ENCODE measurements at regions of chr1 and their contacts with region 1.

Region 1: GRCh38 chr1:40531381-40532061 is at the start of gene ZNF684:
- DNase-seq: peak; percentile 69 to 95
- ATAC-seq: peak; percentile 96 to 98 (median 96)
- H3K4me3 ChIP-seq: peak within 1 kb of the TSS; percentile 70
- H3K4me3 Mint-ChIP-seq: peak within 1 kb of the TSS; percentile 98
- H3K27ac ChIP-seq: peak within 1 kb of the TSS; percentile 76
- H3K27ac Mint-ChIP-seq: peak within 1 kb of the TSS; percentile 92 to 98
- H3K4me1 ChIP-seq: peaks cover 8% of the 10 kb centered on the region
- H3K4me1 Mint-ChIP-seq: peaks cover 26% of the 10 kb centered on the region in 2 donors
- H3K27me3 ChIP-seq: peaks cover 2% of the 10 kb centered on the region
- H3K27me3 Mint-ChIP-seq: peaks cover 13 to 34% of the 10 kb centered on the region in 2 donors
- CTCF ChIP-seq: no peak
- total RNA-seq, gene ZNF684: 5.5 to 9.7 (median 5.7) TPM

Region 2: GRCh38 chr1:40476924-40477677 is 54.4 kb before region 1 on chr1 and contains the start of gene ZFP69:
- intact Hi-C with region 1: loop called (anchors 1 kb)
- DNase-seq: peak; percentile 72 to 84
- ATAC-seq: peak; percentile 90 to 96 (median 95)
- H3K4me3 ChIP-seq: peak within 1 kb of the TSS; percentile 84
- H3K4me3 Mint-ChIP-seq: peak within 1 kb of the TSS; percentile 97
- H3K27ac ChIP-seq: peak within 1 kb of the TSS; percentile 58
- H3K27ac Mint-ChIP-seq: peak within 1 kb of the TSS; percentile 73 to 82
- H3K4me1 ChIP-seq: peaks cover 11% of the 10 kb centered on the region
- H3K4me1 Mint-ChIP-seq: peaks cover 24 to 28% of the 10 kb centered on the region in 2 donors
- H3K27me3 ChIP-seq: no peaks in the 10 kb centered on the region
- H3K27me3 Mint-ChIP-seq: no peaks in the 10 kb centered on the region
- CTCF ChIP-seq: no peak
- total RNA-seq, gene ZFP69: 4.6 to 5.4 (median 4.6) TPM

Region 3: DNA sequence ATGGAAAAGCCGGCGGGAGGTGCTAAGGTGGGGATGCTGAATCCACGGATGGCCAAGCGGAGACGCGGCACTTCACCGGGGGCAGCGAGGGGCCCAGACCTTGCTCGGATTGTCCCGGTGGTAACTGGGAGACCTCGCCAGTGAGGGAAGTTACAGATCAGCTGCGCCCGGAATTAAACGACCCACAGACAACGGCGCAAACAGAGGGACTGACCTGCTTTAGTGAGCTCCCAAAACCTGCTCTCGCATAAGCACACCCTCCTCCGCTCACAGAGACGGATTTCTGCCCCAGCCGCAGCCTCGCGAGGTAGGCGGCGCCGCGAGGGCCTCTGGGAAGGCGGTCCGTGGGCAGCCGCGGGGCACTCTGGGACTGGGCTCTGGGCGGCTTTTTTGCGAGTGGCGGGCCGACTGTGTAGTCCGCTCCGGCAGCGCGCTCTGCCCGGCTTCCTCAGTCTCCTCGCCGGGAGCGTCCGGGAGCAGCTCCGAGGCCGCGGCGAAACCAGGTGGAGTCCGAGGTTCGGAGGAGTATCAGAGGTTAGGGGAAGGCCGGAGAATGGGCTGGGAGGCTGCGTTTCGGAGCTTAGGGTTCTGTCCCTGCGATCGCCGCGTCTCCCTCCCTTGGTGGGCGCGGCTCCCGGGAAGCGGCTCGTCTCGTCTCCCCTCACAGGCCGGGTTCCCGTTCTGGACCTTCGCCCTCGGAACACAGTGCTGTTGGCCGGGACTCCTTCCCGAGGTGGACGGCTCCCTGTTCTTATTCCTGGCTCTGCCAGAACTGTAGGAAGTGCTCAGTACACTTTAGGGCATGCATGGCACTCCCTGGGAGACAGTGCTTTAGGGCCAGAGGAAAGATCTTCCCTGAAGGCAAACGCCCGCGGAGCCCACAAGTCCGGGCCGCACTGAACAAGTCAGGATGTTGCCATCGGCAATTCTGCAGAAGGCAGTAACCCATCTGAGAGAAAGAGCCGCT is 22.9 kb before region 1 on chr1 and contains the start of gene EXO5:
- intact Hi-C with region 1: loop called (anchors 2 kb)
- DNase-seq: peak; percentile 78 to 85
- ATAC-seq: peak; percentile 93 to 96 (median 96)
- H3K4me3 ChIP-seq: peak within 1 kb of the TSS; percentile 89
- H3K4me3 Mint-ChIP-seq: peak within 1 kb of the TSS; percentile 90
- H3K27ac ChIP-seq: peak within 1 kb of the TSS; percentile 73
- H3K27ac Mint-ChIP-seq: peak within 1 kb of the TSS; percentile 89 to 94
- H3K4me1 ChIP-seq: peaks cover 12% of the 10 kb centered on the region
- H3K4me1 Mint-ChIP-seq: peaks cover 19 to 21% of the 10 kb centered on the region in 2 donors
- H3K27me3 ChIP-seq: no peaks in the 10 kb centered on the region
- H3K27me3 Mint-ChIP-seq: no peaks in the 10 kb centered on the region
- CTCF ChIP-seq: no peak
- total RNA-seq, gene EXO5: 9.6 to 17.0 (median 10.1) TPM

Region 4: DNA sequence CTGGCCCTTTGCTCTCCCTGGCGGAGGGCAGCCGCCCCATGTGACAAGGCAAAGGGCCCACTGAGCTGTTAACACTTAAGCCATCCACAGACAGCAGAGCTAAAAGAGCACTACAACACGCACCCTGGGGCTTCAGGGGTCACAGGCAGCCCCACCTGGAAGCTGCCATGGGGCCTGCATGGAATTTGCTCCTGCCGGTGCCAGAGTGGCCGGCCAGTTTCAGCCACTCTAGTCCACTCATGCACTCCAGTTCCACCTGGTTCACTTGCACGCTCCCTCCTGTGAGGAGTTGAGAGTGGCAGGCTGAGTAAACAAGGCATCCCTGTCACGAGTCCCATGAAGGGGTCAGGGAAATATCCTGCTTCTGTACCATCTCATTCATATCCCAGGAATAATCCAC is 78.6 kb after region 1 on chr1:
- intact Hi-C with region 1: no loop called
- DNase-seq: no peak
- ATAC-seq: no peak
- H3K4me3 ChIP-seq: no peak overlapping the region
- H3K4me3 Mint-ChIP-seq: no peak overlapping the region
- H3K27ac ChIP-seq: no peak overlapping the region
- H3K27ac Mint-ChIP-seq: no peak overlapping the region
- H3K4me1 ChIP-seq: no peaks in the 10 kb centered on the region
- H3K4me1 Mint-ChIP-seq: no peaks in the 10 kb centered on the region
- H3K27me3 ChIP-seq: no peaks in the 10 kb centered on the region
- H3K27me3 Mint-ChIP-seq: no peaks in the 10 kb centered on the region
- CTCF ChIP-seq: no peak

Region 5: GRCh38 chr1:40653851-40654537 is 122.5 kb after region 1 on chr1:
- intact Hi-C with region 1: no loop called
- DNase-seq: no peak
- ATAC-seq: peak in 1 of 3 donors; percentile 29
- H3K4me3 ChIP-seq: no peak overlapping the region
- H3K4me3 Mint-ChIP-seq: no peak overlapping the region
- H3K27ac ChIP-seq: no peak overlapping the region
- H3K27ac Mint-ChIP-seq: no peak overlapping the region
- H3K4me1 ChIP-seq: peaks cover 10% of the 10 kb centered on the region
- H3K4me1 Mint-ChIP-seq: peaks cover 0 to 9% of the 10 kb centered on the region in 2 donors
- H3K27me3 ChIP-seq: no peaks in the 10 kb centered on the region
- H3K27me3 Mint-ChIP-seq: peaks cover 8 to 15% of the 10 kb centered on the region in 2 donors
- CTCF ChIP-seq: no peak